Caco-2 (cell line): ENCODE measurements at regions of chr3 and their contacts with region 1.

Region 1: GRCh38 chr3:99875929-99876841 is 58.5 kb downstream of the CMSS1 start:
- DNase-seq: peak; percentile 82 to 90
- H3K4me3 ChIP-seq: peak overlapping the region; percentile 67
- H3K4me3 Mint-ChIP-seq: peak overlapping the region; percentile 82
- H3K27ac Mint-ChIP-seq: peak overlapping the region; percentile 89
- H3K4me1 ChIP-seq: peaks cover 38% of the 10 kb centered on the region
- H3K4me1 Mint-ChIP-seq: peaks cover 12% of the 10 kb centered on the region
- H3K27me3 ChIP-seq: no peaks in the 10 kb centered on the region
- H3K27me3 Mint-ChIP-seq: no peaks in the 10 kb centered on the region
- CTCF ChIP-seq: peak; percentile 0 to 16

Region 2: GRCh38 chr3:99439892-99440291 is 436.3 kb before region 1 on chr3:
- CTCF ChIA-PET with region 1: no interaction called
- POLR2A ChIA-PET with region 1: no interaction called
- intact Hi-C with region 1: no loop called
- DNase-seq: no peak
- H3K4me3 ChIP-seq: no peak overlapping the region
- H3K4me3 Mint-ChIP-seq: no peak overlapping the region
- H3K27ac Mint-ChIP-seq: no peak overlapping the region
- H3K4me1 ChIP-seq: no peaks in the 10 kb centered on the region
- H3K4me1 Mint-ChIP-seq: no peaks in the 10 kb centered on the region
- H3K27me3 ChIP-seq: no peaks in the 10 kb centered on the region
- H3K27me3 Mint-ChIP-seq: peaks cover 4% of the 10 kb centered on the region
- CTCF ChIP-seq: no peak

Region 3: GRCh38 chr3:99783009-99783573 is 93.1 kb before region 1 on chr3:
- CTCF ChIA-PET with region 1: no interaction called
- POLR2A ChIA-PET with region 1: no interaction called
- intact Hi-C with region 1: no loop called
- DNase-seq: no peak
- H3K4me3 ChIP-seq: no peak overlapping the region
- H3K4me3 Mint-ChIP-seq: no peak overlapping the region
- H3K27ac Mint-ChIP-seq: no peak overlapping the region
- H3K4me1 ChIP-seq: no peaks in the 10 kb centered on the region
- H3K4me1 Mint-ChIP-seq: no peaks in the 10 kb centered on the region
- H3K27me3 ChIP-seq: no peaks in the 10 kb centered on the region
- H3K27me3 Mint-ChIP-seq: peaks cover 18% of the 10 kb centered on the region
- CTCF ChIP-seq: no peak

Region 4: DNA sequence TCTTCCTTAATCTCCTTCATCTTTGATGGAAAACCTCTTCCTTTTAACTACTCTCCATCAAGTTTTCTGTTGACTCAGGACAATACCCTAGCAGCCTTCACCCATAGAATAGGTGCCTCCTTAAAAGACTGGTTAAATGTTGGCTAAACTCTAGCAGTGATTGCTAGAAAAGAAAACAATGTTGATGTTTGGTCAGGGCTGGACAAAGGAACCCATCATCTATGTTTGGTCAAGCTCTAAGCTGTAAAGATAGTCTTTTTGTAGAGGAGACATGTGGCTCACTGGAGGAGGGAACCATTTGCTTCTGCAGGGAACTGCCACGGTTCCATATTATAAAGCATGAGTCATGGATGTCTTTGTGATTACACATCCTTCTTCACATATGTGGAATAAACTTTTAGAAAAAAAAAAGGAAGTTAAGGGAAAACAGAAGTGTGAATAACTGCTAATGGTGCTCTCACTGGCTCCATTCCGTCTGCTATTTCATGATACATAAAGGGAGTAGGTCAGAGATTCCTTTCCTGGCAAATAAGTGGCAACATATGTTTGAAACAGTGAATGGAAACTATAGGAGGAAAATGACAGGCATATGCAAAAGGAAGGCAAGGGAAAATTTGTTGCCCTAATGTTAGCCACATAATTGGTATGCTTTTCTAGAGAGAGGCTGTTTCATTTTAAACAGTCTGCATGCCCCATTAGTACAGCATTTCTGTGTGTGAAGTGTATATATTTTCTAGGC is 19.7 kb after region 1 on chr3:
- CTCF ChIA-PET with region 1: no interaction called
- POLR2A ChIA-PET with region 1: no interaction called
- intact Hi-C with region 1: loop called (anchors 1 kb)
- DNase-seq: peak; percentile 52 to 66
- H3K4me3 ChIP-seq: no peak overlapping the region
- H3K4me3 Mint-ChIP-seq: peak overlapping the region; percentile 42
- H3K27ac Mint-ChIP-seq: peak overlapping the region; percentile 89
- H3K4me1 ChIP-seq: peaks cover 38% of the 10 kb centered on the region
- H3K4me1 Mint-ChIP-seq: peaks cover 20% of the 10 kb centered on the region
- H3K27me3 ChIP-seq: no peaks in the 10 kb centered on the region
- H3K27me3 Mint-ChIP-seq: no peaks in the 10 kb centered on the region
- CTCF ChIP-seq: no peak

Region 5: DNA sequence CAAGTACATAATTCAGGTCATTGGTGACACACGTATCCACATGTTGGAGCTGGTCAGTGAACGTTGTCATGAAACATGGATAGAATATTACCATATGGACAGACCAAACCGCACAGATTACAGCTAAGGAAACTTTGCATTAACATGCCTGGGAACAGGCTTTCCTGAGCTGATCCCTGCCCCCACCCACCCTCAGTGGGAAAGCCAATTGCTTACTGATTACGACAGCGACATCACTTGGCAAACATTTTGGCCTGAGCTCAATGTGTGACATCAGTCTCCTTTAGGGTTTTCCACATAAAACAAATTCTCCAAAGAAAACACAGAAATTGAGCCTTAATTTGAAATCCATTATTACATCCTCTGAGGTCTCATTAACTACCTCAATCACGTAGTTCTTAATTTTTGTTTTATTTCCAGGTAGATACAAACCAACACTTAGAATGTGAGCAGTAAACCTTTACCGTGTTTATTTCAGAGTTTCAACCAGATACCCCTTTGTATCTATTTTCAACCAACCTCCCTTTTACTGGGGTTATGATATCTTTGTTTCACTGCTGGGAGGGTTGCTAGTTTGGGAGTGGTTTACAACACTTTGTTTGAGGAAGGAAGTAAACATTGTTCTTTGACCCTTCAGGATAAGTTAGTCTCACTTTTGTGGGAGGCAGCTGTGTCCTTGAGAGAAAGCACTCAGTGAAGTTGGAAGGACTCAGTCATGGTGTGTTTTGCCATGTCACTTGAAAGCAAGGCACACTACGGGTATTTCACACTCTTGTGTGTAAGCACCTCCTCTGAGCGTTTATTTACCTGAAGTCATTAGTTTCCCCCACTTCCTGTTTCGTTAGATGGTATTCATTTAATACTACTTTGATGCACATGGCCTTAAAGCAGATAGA is 44.5 kb after region 1 on chr3:
- CTCF ChIA-PET with region 1: no interaction called
- POLR2A ChIA-PET with region 1: no interaction called
- intact Hi-C with region 1: loop called (anchors 1 kb)
- DNase-seq: peak; percentile 50 to 81
- H3K4me3 ChIP-seq: no peak overlapping the region
- H3K4me3 Mint-ChIP-seq: peak overlapping the region; percentile 32
- H3K27ac Mint-ChIP-seq: peak overlapping the region; percentile 66
- H3K4me1 ChIP-seq: peaks cover 65% of the 10 kb centered on the region
- H3K4me1 Mint-ChIP-seq: peaks cover 54% of the 10 kb centered on the region
- H3K27me3 ChIP-seq: no peaks in the 10 kb centered on the region
- H3K27me3 Mint-ChIP-seq: no peaks in the 10 kb centered on the region
- CTCF ChIP-seq: no peak

Region 6: DNA sequence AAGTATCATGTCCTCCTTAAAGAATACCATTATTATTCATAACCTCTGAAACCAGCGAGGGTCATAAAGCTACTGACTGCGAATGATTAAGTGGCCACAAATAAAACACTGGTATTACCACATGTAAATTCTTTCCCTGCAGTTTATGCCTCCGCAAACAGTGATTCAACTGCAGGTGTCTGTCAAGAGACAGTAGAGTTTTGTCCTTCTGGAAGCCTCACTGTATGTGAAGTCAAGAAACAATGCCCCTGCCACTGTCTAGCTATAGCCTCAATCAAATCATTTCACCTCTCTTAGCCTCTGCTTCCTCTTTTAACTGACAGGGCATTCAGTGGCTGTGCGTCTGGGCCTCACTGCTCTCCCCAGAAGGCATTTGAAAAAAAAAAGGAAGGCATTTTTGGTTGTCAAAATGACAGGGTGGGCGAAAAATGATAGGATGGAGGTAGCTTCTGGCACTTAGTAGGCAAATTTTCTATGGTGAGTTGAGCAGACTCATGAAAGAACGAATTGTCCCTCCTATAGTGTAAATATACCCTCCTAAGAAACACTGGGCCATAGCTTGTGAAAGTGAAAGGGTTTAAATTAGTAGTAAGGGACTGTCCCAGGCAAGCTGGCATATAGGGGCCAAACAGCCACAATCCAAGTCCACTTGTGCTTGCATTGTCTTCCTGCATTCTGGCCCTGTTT is 171.4 kb after region 1 on chr3:
- CTCF ChIA-PET with region 1: no interaction called
- POLR2A ChIA-PET with region 1: no interaction called
- intact Hi-C with region 1: loop called (anchors 5 kb)
- DNase-seq: peak; percentile 69 to 74
- H3K4me3 ChIP-seq: no peak overlapping the region
- H3K4me3 Mint-ChIP-seq: peak overlapping the region; percentile 35
- H3K27ac Mint-ChIP-seq: peak overlapping the region; percentile 86
- H3K4me1 ChIP-seq: peaks cover 72% of the 10 kb centered on the region
- H3K4me1 Mint-ChIP-seq: peaks cover 43% of the 10 kb centered on the region
- H3K27me3 ChIP-seq: no peaks in the 10 kb centered on the region
- H3K27me3 Mint-ChIP-seq: no peaks in the 10 kb centered on the region
- CTCF ChIP-seq: no peak